AG04450 (cell line): ENCODE measurements at regions of chr21 and their contacts with region 1.

Region 1: GRCh38 chr21:32782698-32783097 is 11.1 kb upstream of the PAXBP1 start:
- DNase-seq: no peak
- H3K4me3 ChIP-seq: no peak overlapping the region
- H3K27ac ChIP-seq: no peak overlapping the region
- H3K27me3 ChIP-seq: no peaks in the 10 kb centered on the region
- CTCF ChIP-seq: no peak

Region 2: DNA sequence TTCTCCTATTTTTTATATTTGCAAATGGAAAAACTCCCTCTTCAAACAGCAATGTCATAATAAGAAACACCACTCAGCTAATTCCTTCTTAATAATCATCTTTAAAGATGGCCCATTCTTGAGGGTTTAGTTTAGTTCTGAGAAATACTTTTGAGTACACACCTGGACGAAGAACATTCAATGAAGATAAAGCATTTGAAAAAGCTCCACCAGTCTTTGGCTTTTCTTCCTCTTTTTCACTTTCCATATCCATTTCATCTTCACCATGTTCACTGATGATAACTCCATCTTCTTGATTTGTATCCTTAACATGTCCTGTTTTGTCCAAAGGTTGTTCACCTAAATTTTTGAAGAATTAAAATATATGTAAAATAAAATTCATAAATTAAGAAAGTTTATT is 18.5 kb before region 1 on chr21:
- CTCF ChIA-PET with region 1: no interaction called
- POLR2A ChIA-PET with region 1: no interaction called
- DNase-seq: no peak
- H3K4me3 ChIP-seq: no peak overlapping the region
- H3K27ac ChIP-seq: no peak overlapping the region
- H3K27me3 ChIP-seq: no peaks in the 10 kb centered on the region
- CTCF ChIP-seq: no peak

Region 3: GRCh38 chr21:32807717-32808380 is 25.2 kb after region 1 on chr21:
- CTCF ChIA-PET with region 1: no interaction called
- POLR2A ChIA-PET with region 1: no interaction called
- DNase-seq: no peak
- H3K4me3 ChIP-seq: no peak overlapping the region
- H3K27ac ChIP-seq: no peak overlapping the region
- H3K27me3 ChIP-seq: peaks cover 6% of the 10 kb centered on the region
- CTCF ChIP-seq: no peak

Region 4: GRCh38 chr21:32826329-32827167 is 43.9 kb after region 1 on chr21:
- CTCF ChIA-PET with region 1: interaction called, 43 read pairs
- POLR2A ChIA-PET with region 1: no interaction called
- DNase-seq: peak; percentile 20
- H3K4me3 ChIP-seq: no peak overlapping the region
- H3K27ac ChIP-seq: no peak overlapping the region
- H3K27me3 ChIP-seq: no peaks in the 10 kb centered on the region
- CTCF ChIP-seq: peak; percentile 65

Region 5: DNA sequence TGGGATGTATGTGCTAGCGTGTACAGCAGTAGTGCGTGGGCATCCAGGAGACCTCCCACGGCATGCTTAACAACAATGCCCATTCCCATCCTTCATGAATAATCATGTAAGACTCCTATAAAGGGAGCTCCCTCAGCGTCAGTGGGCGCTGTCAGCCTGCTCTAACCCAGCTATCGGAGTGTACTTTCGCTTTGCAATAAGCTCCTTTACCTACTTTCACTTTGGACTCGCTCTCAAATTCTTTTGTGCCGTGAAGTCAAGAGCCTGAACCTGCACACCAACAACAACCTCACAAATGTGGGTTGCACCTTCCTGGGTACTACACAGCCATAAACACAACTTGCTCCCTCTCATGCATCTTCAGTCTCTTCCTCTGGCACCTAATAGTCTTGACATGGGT is 103.6 kb after region 1 on chr21:
- CTCF ChIA-PET with region 1: no interaction called
- POLR2A ChIA-PET with region 1: no interaction called
- DNase-seq: no peak
- H3K4me3 ChIP-seq: peak overlapping the region; percentile 10; the same call in 1 of the 2 replicates
- H3K27ac ChIP-seq: no peak overlapping the region
- H3K27me3 ChIP-seq: peaks cover 7% of the 10 kb centered on the region
- CTCF ChIP-seq: no peak